Activated T-helper 1 cell treated with anti-CD3 and anti-CD28 coated beads, Interleukin-12 subunit alpha, Interleukin-12 subunit beta, Interleukin-2, Interleukin-4 antibody, amounts not matched to agents 30 ng/mL and 10 ng/mL and 1 ng/mL, durations not matched to agents 14 hours and 24 hours and 36 hours (primary cell): ENCODE measurements at regions of chr11 and their contacts with region 1.

Region 1: DNA sequence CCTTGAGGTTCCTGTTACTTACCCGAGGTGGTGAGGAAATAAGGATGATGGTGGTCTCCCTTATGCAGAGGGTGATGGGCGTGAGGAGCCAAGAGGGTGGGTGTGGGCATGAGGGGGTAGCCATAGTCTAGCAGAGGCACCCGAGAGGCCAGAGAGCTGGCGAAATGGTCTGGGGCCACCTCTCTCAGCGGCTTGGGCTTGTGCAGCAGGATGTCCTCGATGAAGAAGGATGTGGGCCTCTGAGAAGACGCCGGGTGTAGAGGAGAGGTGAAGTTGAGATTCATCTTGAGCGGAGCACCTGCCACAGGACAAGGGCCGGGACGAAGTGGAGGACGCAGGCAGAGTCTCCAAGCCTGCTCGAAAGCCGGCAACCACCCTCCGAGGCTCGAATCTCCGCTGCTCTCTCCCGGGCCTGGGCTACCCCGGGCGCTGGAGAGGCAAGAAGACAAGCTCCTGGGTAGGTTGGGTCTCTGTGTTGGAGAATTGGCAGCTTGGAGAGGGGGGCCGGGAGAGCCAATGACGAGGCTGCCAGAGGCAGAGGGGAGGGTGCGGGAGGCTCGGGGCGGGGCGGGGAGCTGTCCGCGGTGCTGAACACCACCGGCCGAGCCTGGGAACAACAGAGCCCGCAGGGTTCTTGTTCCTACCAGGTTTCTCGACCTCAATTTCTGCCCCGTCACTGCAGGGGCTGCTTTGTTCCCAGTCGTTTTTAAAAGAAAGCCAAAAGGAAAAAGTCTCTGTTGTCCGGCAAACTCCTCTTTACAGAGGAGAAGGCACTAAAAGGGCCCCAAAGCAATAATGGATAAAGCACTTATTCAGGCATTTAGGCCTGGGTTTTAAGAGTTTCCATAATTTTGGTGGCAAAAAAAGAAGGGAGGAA is at the start of gene BSX:
- DNase-seq: peak; percentile 21
- H3K4me3 Mint-ChIP-seq: no peak within 1 kb of the TSS
- H3K27ac Mint-ChIP-seq: no peak within 1 kb of the TSS
- H3K4me1 Mint-ChIP-seq: peaks cover 25% of the 10 kb centered on the region
- H3K27me3 Mint-ChIP-seq: peaks cover 90% of the 10 kb centered on the region
- total RNA-seq, gene BSX: not detected in 2 replicates

Region 2: GRCh38 chr11:122882857-122883645 is 98.6 kb before region 1 on chr11:
- intact Hi-C with region 1: loop called (anchors 5 kb)
- DNase-seq: peak; percentile 36
- H3K4me3 Mint-ChIP-seq: peak overlapping the region; percentile 84
- H3K27ac Mint-ChIP-seq: peak overlapping the region; percentile 75
- H3K4me1 Mint-ChIP-seq: peaks cover 28% of the 10 kb centered on the region
- H3K27me3 Mint-ChIP-seq: peaks cover 9% of the 10 kb centered on the region

Region 3: GRCh38 chr11:123054301-123055065 is 72.9 kb after region 1 on chr11:
- intact Hi-C with region 1: loop called (anchors 2 kb)
- DNase-seq: no peak
- H3K4me3 Mint-ChIP-seq: no peak overlapping the region
- H3K27ac Mint-ChIP-seq: peak overlapping the region; percentile 52
- H3K4me1 Mint-ChIP-seq: peaks cover 49% of the 10 kb centered on the region
- H3K27me3 Mint-ChIP-seq: no peaks in the 10 kb centered on the region

Region 4: DNA sequence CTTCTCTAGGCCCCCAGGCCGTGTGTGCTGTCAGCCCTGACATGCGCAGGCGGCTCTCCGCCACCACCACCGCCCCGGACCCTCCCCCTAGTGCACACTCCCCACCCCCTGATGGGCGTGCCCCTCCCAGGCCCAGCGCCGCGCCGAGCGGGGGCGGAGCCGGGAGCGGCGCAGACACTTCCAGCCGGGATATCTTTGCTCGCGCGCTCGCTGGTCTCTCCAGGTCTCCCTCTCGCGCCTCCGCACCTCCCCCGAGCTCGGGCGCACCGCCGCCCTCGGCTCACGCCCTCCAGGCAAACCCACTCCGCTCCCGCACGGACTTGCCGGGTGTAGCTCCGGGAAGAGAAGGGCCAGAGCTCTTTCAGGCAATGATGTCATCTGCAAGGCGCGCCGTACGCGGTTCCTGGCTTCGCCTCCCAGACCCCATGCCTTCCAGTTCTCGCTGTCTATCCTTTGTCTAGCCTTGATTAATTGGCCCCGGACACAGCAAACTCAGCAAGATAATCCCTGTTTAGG is 673.0 kb after region 1 on chr11 and contains the start of gene SCN3B:
- intact Hi-C with region 1: loop called (anchors 5 kb)
- DNase-seq: peak; percentile 16
- H3K4me3 Mint-ChIP-seq: peak within 1 kb of the TSS; percentile 79
- H3K27ac Mint-ChIP-seq: no peak within 1 kb of the TSS
- H3K4me1 Mint-ChIP-seq: peaks cover 14% of the 10 kb centered on the region
- H3K27me3 Mint-ChIP-seq: peaks cover 49% of the 10 kb centered on the region
- total RNA-seq, gene SCN3B: not detected in 2 replicates